Posterior cingulate gyrus (tissue), 11 donors: ENCODE measurements at regions of chr1 and their contacts with region 1.

Region 1: GRCh38 chr1:160251687-160252526 is 10.4 kb downstream of the DCAF8 start:
- DNase-seq: peak in 9 of 10 donors; percentile 32 to 93 (median 78)

Region 2: GRCh38 chr1:160085686-160086455 is 166.0 kb before region 1 on chr1:
- intact Hi-C with region 1: loop called (anchors 5 kb)
- DNase-seq: peak; percentile 88 to 99 (median 94)

Region 3: DNA sequence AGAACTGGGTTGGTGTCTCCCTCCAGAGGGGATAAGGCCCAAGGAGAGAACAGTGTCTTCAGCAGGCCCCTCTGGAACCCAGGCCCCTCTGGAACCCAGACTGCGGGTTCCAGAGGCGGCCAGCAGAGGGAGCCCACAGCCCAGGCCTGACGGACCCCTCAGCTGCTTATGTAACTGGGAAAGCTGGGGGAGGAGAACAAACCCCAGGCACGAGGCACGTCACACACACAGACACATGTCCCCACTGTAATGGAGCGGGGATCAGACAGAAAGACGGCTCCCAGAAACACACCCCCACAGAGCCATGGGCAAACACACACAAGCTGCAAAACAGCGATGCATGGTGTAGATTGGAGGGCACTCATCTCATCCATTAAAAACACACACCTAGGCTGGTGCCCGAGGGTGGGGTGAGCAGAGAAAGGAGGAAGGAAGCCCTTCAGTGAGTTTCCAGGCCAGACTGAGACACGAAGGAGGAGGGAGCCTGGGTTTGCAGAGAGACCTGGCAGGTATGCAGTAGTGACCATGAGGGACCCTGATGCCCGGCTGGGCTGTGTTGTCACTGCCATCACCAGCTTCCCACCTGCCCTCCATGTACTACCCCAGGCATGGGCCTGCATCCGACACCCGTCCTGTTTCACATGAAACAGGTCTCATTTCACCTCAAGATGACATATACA is 150.7 kb before region 1 on chr1:
- intact Hi-C with region 1: loop called (anchors 1 kb)
- DNase-seq: peak; percentile 83 to 98 (median 90)

Region 4: GRCh38 chr1:160193091-160193819 is 58.7 kb before region 1 on chr1:
- intact Hi-C with region 1: loop called (anchors 2 kb)
- DNase-seq: peak; percentile 70 to 97 (median 92)

Region 5: GRCh38 chr1:160205242-160206035 is 46.5 kb before region 1 on chr1 and contains the start of gene PEA15:
- intact Hi-C with region 1: loop called (anchors 5 kb)
- DNase-seq: peak; percentile 66 to 97 (median 80)